MCF 10A (cell line): ENCODE measurements at regions of chr15 and their contacts with region 1.

Region 1: DNA sequence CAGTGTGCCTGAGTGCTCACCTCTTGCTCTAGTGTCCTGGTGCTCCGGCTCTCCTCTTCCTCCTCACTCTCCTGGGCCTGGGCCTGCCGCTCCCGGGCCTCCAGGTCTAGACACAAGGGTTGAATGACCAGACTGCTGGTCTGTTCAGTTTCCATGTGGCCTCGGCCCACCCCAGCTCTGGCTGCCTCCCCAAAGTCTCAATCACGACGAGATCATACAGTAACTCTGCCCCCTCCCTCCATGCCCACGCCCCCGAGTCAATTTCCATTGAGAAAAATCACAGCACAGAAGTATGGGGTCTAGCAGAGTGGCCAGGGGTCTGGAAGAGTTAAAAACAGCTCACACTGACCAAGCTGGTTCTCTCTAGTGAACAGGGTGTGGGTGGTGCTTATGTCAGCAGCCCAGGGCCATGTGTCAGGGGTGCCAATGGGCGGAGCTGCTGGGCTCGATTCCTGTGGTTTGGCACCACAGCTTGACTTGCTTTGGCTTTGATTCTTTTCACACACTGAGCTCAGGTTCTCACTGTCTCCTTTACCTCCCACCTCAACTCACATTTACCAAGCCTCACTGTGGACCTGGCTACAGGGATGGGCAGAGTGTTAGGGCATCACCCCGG is 6.8 kb downstream of the C15orf62 start:
- DNase-seq: peak; percentile 96
- H3K4me3 Mint-ChIP-seq: peak overlapping the region; percentile 57
- H3K27ac Mint-ChIP-seq: peak overlapping the region; percentile 72
- H3K4me1 Mint-ChIP-seq: peaks cover 12% of the 10 kb centered on the region
- H3K27me3 Mint-ChIP-seq: no peaks in the 10 kb centered on the region
- CTCF ChIP-seq: no peak

Region 2: GRCh38 chr15:40684381-40684780 is 92.2 kb before region 1 on chr15:
- CTCF ChIA-PET with region 1: interaction called, 18 read pairs
- POLR2A ChIA-PET with region 1: no interaction called
- intact Hi-C with region 1: loop called (anchors 5 kb)
- DNase-seq: no peak
- H3K4me3 Mint-ChIP-seq: no peak overlapping the region
- H3K27ac Mint-ChIP-seq: no peak overlapping the region
- H3K4me1 Mint-ChIP-seq: peaks cover under 1% of the 10 kb centered on the region
- H3K27me3 Mint-ChIP-seq: no peaks in the 10 kb centered on the region
- CTCF ChIP-seq: no peak

Region 3: DNA sequence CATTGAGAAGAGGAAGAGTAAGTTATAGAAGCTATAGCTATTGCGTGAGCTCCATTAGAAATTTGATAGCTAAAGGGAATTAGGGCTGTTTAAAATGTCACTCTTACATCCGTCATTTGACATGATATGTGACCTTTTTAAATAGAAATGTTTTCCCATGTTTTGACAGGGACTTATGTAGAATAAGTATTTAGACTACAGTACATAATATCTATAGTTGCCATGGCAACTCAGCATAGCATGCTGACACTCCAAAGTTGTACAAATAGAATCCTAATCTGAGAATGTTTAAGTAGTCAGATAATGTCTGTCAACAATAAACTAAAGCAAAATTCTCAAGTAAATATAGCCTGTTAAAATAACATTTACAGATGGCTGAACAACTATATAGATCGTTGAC is 62.4 kb before region 1 on chr15:
- CTCF ChIA-PET with region 1: no interaction called
- POLR2A ChIA-PET with region 1: no interaction called
- intact Hi-C with region 1: no loop called
- DNase-seq: no peak
- H3K4me3 Mint-ChIP-seq: no peak overlapping the region
- H3K27ac Mint-ChIP-seq: no peak overlapping the region
- H3K4me1 Mint-ChIP-seq: no peaks in the 10 kb centered on the region
- H3K27me3 Mint-ChIP-seq: no peaks in the 10 kb centered on the region
- CTCF ChIP-seq: no peak

Region 4: GRCh38 chr15:40763801-40764732 is 12.6 kb before region 1 on chr15 and contains the start of gene GCHFR:
- CTCF ChIA-PET with region 1: interaction called, 22 read pairs
- POLR2A ChIA-PET with region 1: interaction called, 28 read pairs
- intact Hi-C with region 1: no loop called
- DNase-seq: peak; percentile 78
- H3K4me3 Mint-ChIP-seq: peak within 1 kb of the TSS; percentile 68
- H3K27ac Mint-ChIP-seq: peak within 1 kb of the TSS; percentile 88
- H3K4me1 Mint-ChIP-seq: peaks cover 25% of the 10 kb centered on the region
- H3K27me3 Mint-ChIP-seq: no peaks in the 10 kb centered on the region
- CTCF ChIP-seq: no peak
- total RNA-seq, gene GCHFR: 7.2 and 8.2 TPM in 2 replicates

Region 5: DNA sequence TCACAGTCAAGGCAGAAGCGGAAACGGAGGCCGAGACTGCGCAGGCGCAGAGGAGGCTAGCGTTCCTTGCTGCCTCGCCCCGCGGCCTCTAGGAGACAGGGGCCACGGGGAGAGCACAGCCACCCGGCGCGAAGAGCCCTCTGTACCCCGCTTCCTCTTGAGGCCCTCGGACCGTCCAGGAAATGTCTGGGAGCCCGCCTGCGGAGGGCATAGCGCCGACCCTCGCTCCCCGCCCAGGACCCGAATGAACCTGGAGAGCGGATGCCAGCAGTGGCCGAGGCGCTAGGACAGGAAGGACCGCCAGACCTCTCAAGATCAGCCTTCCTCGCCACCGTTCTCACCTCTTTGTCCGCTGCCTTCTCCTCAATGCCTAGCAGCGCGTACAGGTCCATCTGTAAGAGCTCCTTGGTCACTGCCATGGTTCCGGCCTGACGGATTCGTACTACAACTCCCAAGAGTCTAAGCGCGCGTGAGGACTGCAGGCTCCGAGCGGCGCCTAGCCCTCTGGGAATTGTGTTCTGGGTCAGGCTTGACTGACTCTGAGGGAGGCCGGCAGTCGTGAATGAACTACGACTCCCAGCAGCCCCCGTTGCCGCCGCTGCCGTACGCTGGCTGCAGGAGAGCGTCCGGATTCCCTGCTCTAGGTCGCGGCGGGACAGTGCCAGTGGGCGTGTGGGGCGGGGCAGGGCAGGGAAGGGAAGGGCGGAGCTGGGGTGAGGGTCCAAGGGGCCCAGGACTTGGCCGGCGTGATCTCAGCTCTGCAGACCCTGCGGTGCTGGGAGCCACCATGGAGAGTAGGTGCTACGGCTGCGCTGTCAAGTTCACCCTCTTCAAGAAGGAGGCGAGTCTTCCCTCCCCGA is 30.6 kb after region 1 on chr15 and contains the starts of genes DNAJC17 and ZFYVE19:
- CTCF ChIA-PET with region 1: interaction called, 3 read pairs
- POLR2A ChIA-PET with region 1: interaction called, 11 read pairs
- intact Hi-C with region 1: no loop called
- DNase-seq: peak; percentile 98
- H3K4me3 Mint-ChIP-seq: peak within 1 kb of the TSS; percentile 81
- H3K27ac Mint-ChIP-seq: peak within 1 kb of the TSS; percentile 83
- H3K4me1 Mint-ChIP-seq: peaks cover 12% of the 10 kb centered on the region
- H3K27me3 Mint-ChIP-seq: no peaks in the 10 kb centered on the region
- CTCF ChIP-seq: peak; percentile 10
- total RNA-seq, gene DNAJC17: 55.1 and 58.1 TPM in 2 replicates
- total RNA-seq, gene ZFYVE19: 19.2 and 19.9 TPM in 2 replicates